GM12878 (cell line): ENCODE measurements at regions of chr2 and their contacts with region 1.

Region 1: DNA sequence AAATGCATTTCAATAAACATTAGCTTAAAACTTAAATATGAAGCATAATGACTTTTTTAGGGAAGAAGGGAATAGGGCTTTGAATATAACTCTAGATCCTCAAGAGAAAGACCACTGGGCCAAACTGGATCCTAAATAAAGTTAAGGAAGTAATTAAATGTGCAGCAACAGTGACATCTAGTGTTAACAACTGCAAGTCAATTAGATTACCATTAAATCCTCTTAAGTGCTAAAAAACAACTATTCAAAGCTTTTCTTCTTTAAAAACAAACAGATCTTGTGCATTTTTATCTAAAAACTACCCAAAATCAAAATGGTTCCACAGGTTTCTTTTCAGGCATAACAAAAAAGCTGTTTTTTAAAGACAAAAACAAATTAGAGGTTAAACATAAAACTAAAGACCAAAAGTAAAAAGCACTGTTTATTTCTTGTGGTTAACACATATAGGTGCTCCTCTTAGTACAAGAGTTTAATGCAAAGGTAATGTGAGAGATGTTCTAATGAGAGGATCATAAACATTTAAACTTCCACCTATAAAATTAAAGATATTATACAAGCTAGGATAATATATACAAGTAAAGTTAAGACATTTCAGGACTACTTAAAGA is 111.4 kb downstream of the THADA start:
- DNase-seq: no peak
- ATAC-seq: peak; percentile 34
- H3K4me3 ChIP-seq: no peak overlapping the region
- H3K27ac ChIP-seq: no peak overlapping the region
- H3K4me1 ChIP-seq: peaks cover 22% of the 10 kb centered on the region
- H3K27me3 ChIP-seq: no peaks in the 10 kb centered on the region
- CTCF ChIP-seq: peak in 2 of 3 experiments; percentile 59 to 73; a peak in 5 of 6 replicates
- EP300 ChIP-seq: no peak
- POLR2A ChIP-seq: no peak
- RAD21 ChIP-seq: peak; percentile 76

Region 2: GRCh38 chr2:42944779-42945415 is 539.5 kb before region 1 on chr2:
- CTCF ChIA-PET with region 1: interaction called, 69 read pairs
- POLR2A ChIA-PET with region 1: interaction called, 4 read pairs
- RAD21 ChIA-PET with region 1: interaction called, 58 read pairs
- SMC1A ChIA-PET with region 1: interaction called, 62 read pairs
- in situ Hi-C with region 1: loop called (anchors 5 kb)
- intact Hi-C with region 1: loop called (anchors 2 kb)
- DNase-seq: no peak
- ATAC-seq: peak; percentile 39; the same call in 2 of the 3 replicates
- H3K4me3 ChIP-seq: no peak overlapping the region
- H3K27ac ChIP-seq: no peak overlapping the region
- H3K4me1 ChIP-seq: no peaks in the 10 kb centered on the region
- H3K27me3 ChIP-seq: no peaks in the 10 kb centered on the region
- CTCF ChIP-seq: no peak
- EP300 ChIP-seq: no peak
- POLR2A ChIP-seq: no peak
- RAD21 ChIP-seq: no peak

Region 3: DNA sequence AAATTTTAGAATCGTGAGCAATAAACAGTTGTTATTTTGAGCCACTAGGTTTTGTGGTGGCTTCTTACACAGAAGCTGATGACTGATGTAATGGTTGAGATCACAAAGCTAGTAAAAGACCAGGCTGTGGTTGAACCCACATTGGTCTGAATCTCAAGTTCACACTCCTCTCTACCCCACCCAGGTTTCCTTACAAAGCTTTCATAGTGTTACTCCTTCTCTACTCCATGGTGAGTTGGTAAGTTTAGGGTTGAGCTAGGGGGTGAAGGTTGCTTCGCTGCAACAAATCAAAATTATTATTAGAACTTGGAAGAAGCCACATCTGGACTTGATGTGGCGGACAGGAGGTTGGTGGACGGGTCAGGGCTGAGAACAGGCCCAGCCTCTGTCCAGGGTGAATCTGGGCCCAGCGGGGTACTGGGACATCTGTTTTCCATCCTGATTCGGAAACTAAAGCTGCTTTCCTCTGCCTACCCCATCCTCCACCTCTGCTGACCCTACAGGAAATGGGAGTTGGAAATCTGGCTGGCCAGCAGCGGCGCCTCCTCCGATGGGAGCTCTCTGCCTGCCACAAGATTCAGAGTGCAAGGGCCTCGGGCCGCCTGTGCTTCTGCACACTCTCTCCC is 344.3 kb before region 1 on chr2:
- CTCF ChIA-PET with region 1: interaction called, 14 read pairs
- POLR2A ChIA-PET with region 1: interaction called, 3 read pairs
- RAD21 ChIA-PET with region 1: interaction called, 4 read pairs
- SMC1A ChIA-PET with region 1: interaction called, 108 read pairs
- in situ Hi-C with region 1: no loop called
- intact Hi-C with region 1: no loop called
- DNase-seq: no peak
- ATAC-seq: peak; percentile 80
- H3K4me3 ChIP-seq: no peak overlapping the region
- H3K27ac ChIP-seq: no peak overlapping the region
- H3K4me1 ChIP-seq: peaks cover 24% of the 10 kb centered on the region
- H3K27me3 ChIP-seq: no peaks in the 10 kb centered on the region
- CTCF ChIP-seq: no peak
- EP300 ChIP-seq: no peak
- POLR2A ChIP-seq: no peak
- RAD21 ChIP-seq: no peak

Region 4: DNA sequence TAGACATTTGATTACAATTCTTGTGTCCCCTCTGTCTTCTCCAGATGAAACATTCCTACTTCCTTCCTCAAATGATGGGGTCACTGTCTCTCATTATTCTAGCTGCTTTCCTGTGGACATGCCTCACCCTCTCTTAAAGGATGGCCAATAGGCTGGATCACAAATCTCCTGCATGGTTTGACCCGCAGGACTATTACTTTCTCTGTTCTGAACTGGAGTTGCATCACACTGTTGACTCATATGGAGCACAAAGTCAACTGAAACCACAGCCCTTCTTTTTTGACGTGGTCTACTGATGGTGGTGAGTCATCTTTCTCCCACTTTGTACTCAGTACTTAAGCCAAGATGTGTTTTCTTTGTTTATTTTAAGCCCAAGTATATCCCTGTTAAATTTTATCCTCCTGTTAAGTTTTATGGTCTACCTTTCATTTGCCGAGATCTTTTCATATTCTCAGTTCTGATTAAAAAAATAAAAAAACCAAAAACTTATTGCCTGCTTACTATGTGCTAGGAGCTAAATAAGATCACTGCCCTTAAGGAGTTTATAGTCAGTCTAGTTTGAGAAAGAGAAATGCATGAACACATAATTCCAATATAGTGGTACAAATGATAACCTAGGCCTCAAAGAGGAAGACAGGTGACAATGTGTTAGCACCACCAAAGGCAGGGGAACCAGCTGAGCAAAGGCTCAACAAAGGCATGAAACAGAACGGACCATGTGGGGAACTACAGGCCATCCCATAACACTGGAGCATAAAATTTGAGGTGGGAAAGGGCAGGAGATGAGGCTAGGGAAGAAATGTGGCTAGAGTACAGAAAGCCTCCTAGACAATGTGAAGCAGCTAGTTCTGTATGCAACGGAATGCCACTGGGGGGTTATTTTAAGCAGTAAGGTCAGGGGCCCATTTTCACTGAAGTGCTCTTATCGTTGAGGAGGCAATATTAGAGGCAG is 190.4 kb before region 1 on chr2:
- CTCF ChIA-PET with region 1: interaction called, 4 read pairs
- POLR2A ChIA-PET with region 1: no interaction called
- RAD21 ChIA-PET with region 1: interaction called, 12 read pairs
- SMC1A ChIA-PET with region 1: interaction called, 17 read pairs
- in situ Hi-C with region 1: no loop called
- intact Hi-C with region 1: loop called (anchors 2 kb)
- DNase-seq: peak; percentile 90
- ATAC-seq: peak; percentile 98
- H3K4me3 ChIP-seq: peak overlapping the region; percentile 6; the same call in 1 of the 2 replicates
- H3K27ac ChIP-seq: peak overlapping the region; percentile 78
- H3K4me1 ChIP-seq: peaks cover 21% of the 10 kb centered on the region
- H3K27me3 ChIP-seq: no peaks in the 10 kb centered on the region
- CTCF ChIP-seq: no peak
- EP300 ChIP-seq: peak; percentile 87 to 88; a peak in 3 of 4 replicates
- POLR2A ChIP-seq: no peak
- RAD21 ChIP-seq: 0 out of 2 replicates have a peak, but pooled peaks have one; percentile 5

Region 5: DNA sequence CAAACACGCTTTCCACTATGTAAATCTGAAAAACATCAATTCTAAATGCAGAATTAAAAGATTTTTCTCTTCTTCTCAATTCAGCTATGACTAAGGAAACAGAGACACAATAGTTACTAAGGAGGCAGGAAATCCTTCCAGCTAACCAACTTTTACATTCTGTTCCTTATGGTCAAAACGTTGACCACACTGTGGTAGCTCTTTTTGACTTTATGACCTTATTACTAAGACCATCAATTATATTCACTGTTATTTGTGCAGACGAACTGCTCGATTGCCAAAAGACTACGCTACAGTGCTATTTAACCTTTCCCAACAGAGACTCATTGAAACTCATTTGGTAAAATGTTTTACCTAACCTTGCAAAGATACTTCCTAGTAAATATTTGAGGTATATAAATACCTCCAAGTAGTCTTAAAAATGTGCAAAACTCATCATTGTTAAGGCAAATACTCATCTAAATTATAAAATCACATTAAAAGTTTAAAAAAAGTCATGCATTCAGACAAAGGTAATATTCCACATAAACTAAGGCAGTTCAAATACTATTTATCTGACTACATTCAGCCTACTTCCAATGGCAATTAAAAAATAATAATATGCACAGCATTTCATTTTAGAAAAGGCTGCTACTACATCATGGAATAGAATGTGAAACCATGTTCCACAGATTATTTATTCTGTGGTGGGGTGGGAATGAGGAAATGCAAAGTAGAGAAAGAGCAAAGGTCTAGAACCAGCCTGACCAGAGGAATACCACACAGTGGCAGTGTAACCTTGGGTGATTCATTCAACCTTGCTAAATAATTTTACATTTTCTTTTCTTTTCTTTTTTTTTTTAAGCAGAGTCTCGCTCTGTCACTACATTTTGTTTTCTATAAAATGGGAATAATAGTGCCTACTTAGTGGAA is 28.4 kb before region 1 on chr2:
- CTCF ChIA-PET with region 1: interaction called, 26 read pairs
- POLR2A ChIA-PET with region 1: interaction called, 11 read pairs
- RAD21 ChIA-PET with region 1: interaction called, 64 read pairs
- SMC1A ChIA-PET with region 1: interaction called, 53 read pairs
- in situ Hi-C with region 1: no loop called
- intact Hi-C with region 1: loop called (anchors 2 kb)
- DNase-seq: peak; percentile 35
- ATAC-seq: peak; percentile 75
- H3K4me3 ChIP-seq: no peak overlapping the region
- H3K27ac ChIP-seq: peak overlapping the region; percentile 1; the same call in 1 of the 2 replicates
- H3K4me1 ChIP-seq: peaks cover 35% of the 10 kb centered on the region
- H3K27me3 ChIP-seq: no peaks in the 10 kb centered on the region
- CTCF ChIP-seq: peak; percentile 5 to 26 (median 21); a peak in 3 of 6 replicates
- EP300 ChIP-seq: peak in 1 of 2 experiments; percentile 36; a peak in 1 of 4 replicates
- POLR2A ChIP-seq: no peak
- RAD21 ChIP-seq: 0 out of 2 replicates have a peak, but pooled peaks have one; percentile 9

Region 6: DNA sequence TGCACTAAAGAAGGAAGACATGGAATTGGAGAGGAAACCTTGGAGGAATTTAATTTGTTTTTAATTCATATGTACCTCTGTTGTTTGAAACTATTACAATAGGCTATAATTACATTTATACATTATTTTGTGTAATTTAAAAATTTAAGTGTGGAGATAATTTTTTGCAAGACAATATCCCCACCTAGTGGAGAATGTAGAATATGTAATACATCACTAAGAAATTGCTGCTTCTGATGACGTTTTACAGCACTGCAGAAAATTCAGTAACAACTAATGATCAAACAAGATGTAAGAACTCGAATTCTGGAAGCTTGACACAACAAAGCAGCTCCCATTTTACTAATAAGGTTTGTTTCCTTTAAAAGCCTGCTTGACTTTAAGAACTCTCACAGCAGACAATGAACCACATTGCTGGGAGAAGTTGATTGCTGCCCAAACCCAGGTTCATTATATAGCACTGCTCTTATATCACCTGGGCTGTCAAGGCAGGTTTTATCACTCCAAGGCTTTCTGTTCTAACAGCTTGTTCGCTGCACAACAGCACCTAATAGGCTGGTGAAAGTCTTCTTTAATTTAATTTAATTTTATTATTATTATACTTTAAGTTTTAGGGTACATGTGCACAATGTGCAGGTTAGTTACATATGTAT is 58.0 kb after region 1 on chr2:
- CTCF ChIA-PET with region 1: interaction called, 60 read pairs
- POLR2A ChIA-PET with region 1: no interaction called
- RAD21 ChIA-PET with region 1: interaction called, 25 read pairs
- SMC1A ChIA-PET with region 1: interaction called, 47 read pairs
- in situ Hi-C with region 1: no loop called
- intact Hi-C with region 1: no loop called
- DNase-seq: no peak
- ATAC-seq: peak; percentile 76
- H3K4me3 ChIP-seq: no peak overlapping the region
- H3K27ac ChIP-seq: no peak overlapping the region
- H3K4me1 ChIP-seq: no peaks in the 10 kb centered on the region
- H3K27me3 ChIP-seq: no peaks in the 10 kb centered on the region
- CTCF ChIP-seq: peak; percentile 36 to 58 (median 45); a peak in 3 of 6 replicates
- EP300 ChIP-seq: no peak
- POLR2A ChIP-seq: no peak
- RAD21 ChIP-seq: peak; percentile 61

Region 7: DNA sequence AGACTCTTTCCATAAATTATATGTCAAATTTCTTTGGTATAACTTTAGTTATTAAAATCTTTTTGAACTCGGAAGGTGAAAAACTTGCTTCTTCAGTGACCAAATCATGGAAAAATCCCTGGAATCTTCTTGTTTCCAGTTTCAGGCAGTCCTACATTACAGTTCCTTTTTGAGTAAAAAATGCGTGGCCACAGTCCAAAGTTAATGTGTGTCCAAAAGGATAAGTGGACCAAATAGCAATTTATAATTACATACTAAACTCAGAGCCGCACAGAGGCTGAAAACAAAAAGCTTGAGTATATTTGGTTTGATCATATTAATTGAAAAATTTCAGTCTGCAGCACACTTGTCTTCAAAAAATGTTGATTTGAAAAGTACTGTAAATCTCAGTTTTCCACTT is 261.0 kb after region 1 on chr2:
- CTCF ChIA-PET with region 1: no interaction called
- POLR2A ChIA-PET with region 1: no interaction called
- RAD21 ChIA-PET with region 1: no interaction called
- SMC1A ChIA-PET with region 1: no interaction called
- in situ Hi-C with region 1: no loop called
- intact Hi-C with region 1: no loop called
- DNase-seq: no peak
- ATAC-seq: no peak
- H3K4me3 ChIP-seq: no peak overlapping the region
- H3K27ac ChIP-seq: no peak overlapping the region
- H3K4me1 ChIP-seq: no peaks in the 10 kb centered on the region
- H3K27me3 ChIP-seq: peaks cover 0 to 1% of the 10 kb centered on the region in 2 experiments; a peak in 1 of 4 replicates
- CTCF ChIP-seq: no peak
- EP300 ChIP-seq: no peak
- POLR2A ChIP-seq: no peak
- RAD21 ChIP-seq: no peak